ENCODE measurements at regions of chr7 and their contacts with region 1.

Region 1: GRCh38 chr7:40057292-40057691 is 77.1 kb downstream of the MPLKIP start:
- DNase-seq: no peak
- H3K4me3 ChIP-seq: no peak overlapping the region
- H3K27ac ChIP-seq: no peak overlapping the region
- H3K4me1 ChIP-seq: peaks cover 0 to 6% (median 0%) of the 10 kb centered on the region in 3 donors
- H3K27me3 ChIP-seq: no peaks in the 10 kb centered on the region
- CTCF ChIP-seq: no peak
- POLR2A ChIP-seq: no peak

Region 2: GRCh38 chr7:39894904-39895303 is 162.4 kb before region 1 on chr7:
- intact Hi-C with region 1: loop called (anchors 5 kb)
- DNase-seq: no peak
- H3K4me3 ChIP-seq: no peak overlapping the region
- H3K27ac ChIP-seq: no peak overlapping the region
- H3K4me1 ChIP-seq: peaks cover 0 to 40% (median 3%) of the 10 kb centered on the region in 3 donors
- H3K27me3 ChIP-seq: no peaks in the 10 kb centered on the region
- CTCF ChIP-seq: no peak
- POLR2A ChIP-seq: no peak

Region 3: GRCh38 chr7:39949980-39950472 is 107.3 kb before region 1 on chr7 and contains the start of gene CDK13:
- intact Hi-C with region 1: loop called (anchors 10 kb)
- DNase-seq: peak; percentile 46
- H3K4me3 ChIP-seq: peak within 1 kb of the TSS; percentile 71 to 95 (median 90)
- H3K27ac ChIP-seq: peak within 1 kb of the TSS; percentile 95 to 100 (median 98)
- H3K4me1 ChIP-seq: peaks cover 5 to 38% (median 19%) of the 10 kb centered on the region in 3 donors
- H3K27me3 ChIP-seq: no peaks in the 10 kb centered on the region
- CTCF ChIP-seq: peak in 1 of 6 experiments; percentile 16
- POLR2A ChIP-seq: peak in 1 of 4 donors; percentile 8
- total RNA-seq, gene CDK13: 46.0 to 99.8 (median 66.0) TPM